ENCODE measurements at regions of chrX and their contacts with region 1.

Region 1: DNA sequence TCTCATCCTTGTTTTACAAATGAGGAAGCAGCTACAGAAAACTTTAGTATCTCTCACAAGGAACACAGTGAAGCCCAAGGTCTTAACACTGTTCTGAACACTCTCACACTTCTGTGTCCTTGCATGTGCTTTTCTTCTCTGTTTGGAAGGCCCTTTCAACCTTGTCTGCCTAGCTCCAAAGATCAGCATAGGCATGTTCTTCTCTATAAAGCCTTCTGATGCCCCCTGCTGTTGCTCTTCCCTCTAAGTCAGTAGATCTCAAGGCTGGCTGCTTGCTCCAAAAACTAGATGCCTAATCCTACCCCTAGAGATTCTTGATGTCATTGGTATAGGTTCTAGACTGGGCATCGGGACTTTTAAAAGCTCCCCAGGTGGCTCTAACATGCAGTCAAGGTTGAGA is 5.9 kb downstream of the APOO start:
- DNase-seq: peak; percentile 87
- H3K4me3 Mint-ChIP-seq: no peak overlapping the region
- H3K27ac Mint-ChIP-seq: no peak overlapping the region
- H3K4me1 Mint-ChIP-seq: peaks cover 16% of the 10 kb centered on the region
- H3K27me3 Mint-ChIP-seq: no peaks in the 10 kb centered on the region
- CTCF ChIP-seq: peak; percentile 56

Region 2: GRCh38 chrX:23292988-23293651 is 608.7 kb before region 1 on chrX:
- CTCF ChIA-PET with region 1: no interaction called
- POLR2A ChIA-PET with region 1: no interaction called
- intact Hi-C with region 1: no loop called
- DNase-seq: peak; percentile 5
- H3K4me3 Mint-ChIP-seq: no peak overlapping the region
- H3K27ac Mint-ChIP-seq: no peak overlapping the region
- H3K4me1 Mint-ChIP-seq: no peaks in the 10 kb centered on the region
- H3K27me3 Mint-ChIP-seq: peaks cover 25% of the 10 kb centered on the region
- CTCF ChIP-seq: no peak

Region 3: GRCh38 chrX:23673108-23673507 is 228.7 kb before region 1 on chrX:
- CTCF ChIA-PET with region 1: interaction called, 14 read pairs
- POLR2A ChIA-PET with region 1: interaction called, 8 read pairs
- intact Hi-C with region 1: no loop called
- DNase-seq: no peak
- H3K4me3 Mint-ChIP-seq: no peak overlapping the region
- H3K27ac Mint-ChIP-seq: no peak overlapping the region
- H3K4me1 Mint-ChIP-seq: peaks cover 4% of the 10 kb centered on the region
- H3K27me3 Mint-ChIP-seq: peaks cover 37% of the 10 kb centered on the region
- CTCF ChIP-seq: no peak

Region 4: GRCh38 chrX:23737413-23737812 is 164.4 kb before region 1 on chrX:
- CTCF ChIA-PET with region 1: interaction called, 15 read pairs
- POLR2A ChIA-PET with region 1: interaction called, 21 read pairs
- intact Hi-C with region 1: no loop called
- DNase-seq: peak; percentile 33
- H3K4me3 Mint-ChIP-seq: no peak overlapping the region
- H3K27ac Mint-ChIP-seq: no peak overlapping the region
- H3K4me1 Mint-ChIP-seq: peaks cover 13% of the 10 kb centered on the region
- H3K27me3 Mint-ChIP-seq: peaks cover 10% of the 10 kb centered on the region
- CTCF ChIP-seq: no peak

Region 5: DNA sequence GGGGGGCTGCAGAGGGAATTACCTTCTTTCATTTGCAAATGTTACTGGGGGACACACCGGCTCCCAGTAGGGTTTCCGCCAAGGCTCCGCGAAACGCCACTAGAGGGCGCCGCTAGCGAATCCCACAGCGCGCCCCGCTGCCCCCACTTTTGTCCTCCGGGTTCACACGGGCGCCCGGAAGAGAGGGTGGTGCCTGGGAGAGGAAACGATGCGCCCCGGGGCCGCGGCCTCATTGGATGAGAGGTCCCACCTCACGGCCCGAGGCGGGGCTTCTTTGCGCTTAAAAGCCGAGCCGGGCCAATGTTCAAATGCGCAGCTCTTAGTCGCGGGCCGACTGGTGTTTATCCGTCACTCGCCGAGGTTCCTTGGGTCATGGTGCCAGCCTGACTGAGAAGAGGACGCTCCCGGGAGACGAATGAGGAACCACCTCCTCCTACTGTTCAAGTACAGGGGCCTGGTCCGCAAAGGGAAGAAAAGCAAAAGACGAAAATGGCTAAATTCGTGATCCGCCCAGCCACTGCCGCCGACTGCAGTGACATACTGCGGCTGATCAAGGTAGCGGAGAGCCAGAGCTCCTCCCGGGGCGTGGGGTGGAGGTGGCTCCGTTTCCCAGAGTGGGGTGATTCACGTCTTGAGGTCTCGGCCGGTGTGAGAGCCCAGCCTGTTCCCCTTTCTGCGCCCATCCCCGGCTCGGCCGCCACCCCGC is 118.8 kb before region 1 on chrX and contains the start of gene SAT1:
- CTCF ChIA-PET with region 1: interaction called, 54 read pairs
- POLR2A ChIA-PET with region 1: interaction called, 140 read pairs
- intact Hi-C with region 1: no loop called
- DNase-seq: peak; percentile 95
- H3K4me3 Mint-ChIP-seq: peak within 1 kb of the TSS; percentile 76
- H3K27ac Mint-ChIP-seq: peak within 1 kb of the TSS; percentile 80
- H3K4me1 Mint-ChIP-seq: peaks cover 23% of the 10 kb centered on the region
- H3K27me3 Mint-ChIP-seq: no peaks in the 10 kb centered on the region
- CTCF ChIP-seq: peak; percentile 56
- total RNA-seq, gene SAT1: 582 and 687 TPM in 2 replicates

Region 6: DNA sequence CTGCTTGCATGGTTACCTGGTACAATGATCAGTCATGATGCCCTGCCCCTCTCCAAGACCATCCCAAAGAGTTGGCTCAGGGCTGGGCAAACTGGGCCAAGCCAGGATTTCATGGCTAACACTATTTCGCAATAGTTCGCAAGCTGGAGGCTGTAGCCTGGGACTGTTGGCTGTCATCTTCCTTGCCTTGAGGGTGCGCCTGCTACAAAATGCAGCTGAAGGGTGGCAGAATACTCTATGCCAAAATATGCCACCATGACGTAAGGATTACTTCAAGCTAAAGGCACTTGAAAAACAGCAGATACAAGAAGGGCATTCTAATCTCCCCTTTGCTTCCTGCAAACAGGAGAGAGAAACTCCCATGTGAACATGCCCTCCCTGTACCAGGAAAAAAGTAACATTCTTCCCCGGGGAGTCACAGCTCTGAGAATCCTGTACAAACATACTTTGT is 97.8 kb before region 1 on chrX:
- CTCF ChIA-PET with region 1: interaction called, 27 read pairs
- POLR2A ChIA-PET with region 1: interaction called, 21 read pairs
- intact Hi-C with region 1: loop called (anchors 5 kb)
- DNase-seq: peak; percentile 97
- H3K4me3 Mint-ChIP-seq: peak overlapping the region; percentile 62
- H3K27ac Mint-ChIP-seq: peak overlapping the region; percentile 59
- H3K4me1 Mint-ChIP-seq: peaks cover 30% of the 10 kb centered on the region
- H3K27me3 Mint-ChIP-seq: no peaks in the 10 kb centered on the region
- CTCF ChIP-seq: no peak

Region 7: DNA sequence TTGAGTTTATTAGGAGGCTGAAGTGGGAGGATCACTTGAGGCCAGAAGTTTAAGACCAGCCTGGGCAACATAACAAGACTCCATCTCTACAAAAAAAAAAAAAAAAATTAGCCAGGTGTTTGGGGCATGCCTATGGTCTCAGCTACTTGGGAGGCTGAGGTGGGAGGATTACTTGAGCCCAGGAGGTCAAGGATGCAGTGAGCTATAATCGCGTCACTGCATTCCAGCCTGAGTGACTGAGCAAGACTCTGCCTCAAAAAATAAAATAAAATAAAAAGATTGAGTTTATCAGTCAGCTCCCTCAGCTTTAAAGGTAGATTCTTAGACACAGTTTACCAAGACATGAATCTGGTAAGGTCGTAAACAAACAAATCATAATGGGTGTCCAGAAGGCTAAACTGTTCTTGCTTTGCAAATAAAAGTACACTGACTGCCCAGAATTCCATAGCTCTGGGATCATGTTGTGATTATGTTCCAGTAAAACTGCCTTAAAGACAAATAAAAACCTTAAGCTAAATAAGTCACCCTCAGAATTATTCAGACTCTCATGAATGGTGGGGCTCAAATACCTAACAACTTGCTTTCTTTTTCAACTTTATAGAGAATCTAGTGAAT is 12.8 kb before region 1 on chrX:
- CTCF ChIA-PET with region 1: interaction called, 16 read pairs
- POLR2A ChIA-PET with region 1: interaction called, 16 read pairs
- intact Hi-C with region 1: no loop called
- DNase-seq: no peak
- H3K4me3 Mint-ChIP-seq: no peak overlapping the region
- H3K27ac Mint-ChIP-seq: peak overlapping the region; percentile 59
- H3K4me1 Mint-ChIP-seq: peaks cover 14% of the 10 kb centered on the region
- H3K27me3 Mint-ChIP-seq: no peaks in the 10 kb centered on the region
- CTCF ChIP-seq: no peak

Measured in MCF 10A (cell line).